ENCODE measurements at regions of chr2 and their contacts with region 1.

Region 1: DNA sequence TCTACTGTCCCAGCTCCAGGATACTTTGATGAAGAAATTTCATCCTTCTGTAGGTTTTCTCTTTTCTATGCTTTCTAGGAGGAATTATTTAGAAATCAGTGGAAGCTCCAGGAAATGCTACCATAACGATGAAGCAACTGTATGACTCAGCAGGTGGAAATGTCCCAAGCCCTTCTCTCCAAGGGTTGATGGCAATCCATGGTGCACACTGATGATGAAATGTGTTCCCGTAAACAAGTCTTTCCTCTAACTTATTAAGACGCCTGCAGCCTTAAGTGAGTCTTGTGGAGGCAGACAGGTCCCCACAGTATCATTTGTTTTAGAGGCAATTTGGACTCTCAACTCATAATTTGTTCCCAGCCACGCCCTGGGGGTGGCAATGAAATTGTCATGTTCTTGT is 777.6 kb upstream of the SOX11 start:
- DNase-seq: peak; percentile 98
- H3K4me3 Mint-ChIP-seq: no peak overlapping the region
- H3K27ac Mint-ChIP-seq: no peak overlapping the region
- H3K4me1 Mint-ChIP-seq: peaks cover 38% of the 10 kb centered on the region
- H3K27me3 Mint-ChIP-seq: no peaks in the 10 kb centered on the region
- CTCF ChIP-seq: no peak

Region 2: DNA sequence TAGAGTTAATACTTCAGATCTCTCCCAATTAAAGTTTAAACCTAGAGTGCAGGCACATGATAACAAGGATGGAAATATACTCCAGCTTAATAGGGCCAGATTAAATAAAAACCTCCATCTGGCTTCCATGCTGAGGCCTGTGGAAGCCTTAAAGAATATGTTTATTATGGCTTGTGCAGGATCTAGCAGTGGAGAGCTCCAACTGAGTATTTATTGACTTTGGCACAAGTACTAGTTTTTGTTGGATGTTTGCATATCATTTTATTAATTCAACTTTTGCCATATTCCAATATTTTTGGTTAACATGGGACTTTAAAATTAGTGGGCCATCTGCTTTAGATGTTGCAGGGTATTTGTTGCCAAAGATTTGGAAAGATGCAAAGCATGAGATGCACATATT is 82.8 kb before region 1 on chr2:
- CTCF ChIA-PET with region 1: no interaction called
- POLR2A ChIA-PET with region 1: no interaction called
- intact Hi-C with region 1: no loop called
- DNase-seq: no peak
- H3K4me3 Mint-ChIP-seq: no peak overlapping the region
- H3K27ac Mint-ChIP-seq: no peak overlapping the region
- H3K4me1 Mint-ChIP-seq: peaks cover 14% of the 10 kb centered on the region
- H3K27me3 Mint-ChIP-seq: no peaks in the 10 kb centered on the region
- CTCF ChIP-seq: no peak

Region 3: GRCh38 chr2:4862031-4862430 is 52.5 kb before region 1 on chr2:
- CTCF ChIA-PET with region 1: no interaction called
- POLR2A ChIA-PET with region 1: interaction called, 11 read pairs
- intact Hi-C with region 1: no loop called
- DNase-seq: peak; percentile 85
- H3K4me3 Mint-ChIP-seq: no peak overlapping the region
- H3K27ac Mint-ChIP-seq: no peak overlapping the region
- H3K4me1 Mint-ChIP-seq: peaks cover 11% of the 10 kb centered on the region
- H3K27me3 Mint-ChIP-seq: no peaks in the 10 kb centered on the region
- CTCF ChIP-seq: no peak

Region 4: GRCh38 chr2:4898706-4899105 is 15.8 kb before region 1 on chr2:
- CTCF ChIA-PET with region 1: no interaction called
- POLR2A ChIA-PET with region 1: interaction called, 6 read pairs
- intact Hi-C with region 1: loop called (anchors 1 kb)
- DNase-seq: peak; percentile 82
- H3K4me3 Mint-ChIP-seq: no peak overlapping the region
- H3K27ac Mint-ChIP-seq: peak overlapping the region; percentile 44
- H3K4me1 Mint-ChIP-seq: peaks cover 24% of the 10 kb centered on the region
- H3K27me3 Mint-ChIP-seq: no peaks in the 10 kb centered on the region
- CTCF ChIP-seq: no peak

Region 5: DNA sequence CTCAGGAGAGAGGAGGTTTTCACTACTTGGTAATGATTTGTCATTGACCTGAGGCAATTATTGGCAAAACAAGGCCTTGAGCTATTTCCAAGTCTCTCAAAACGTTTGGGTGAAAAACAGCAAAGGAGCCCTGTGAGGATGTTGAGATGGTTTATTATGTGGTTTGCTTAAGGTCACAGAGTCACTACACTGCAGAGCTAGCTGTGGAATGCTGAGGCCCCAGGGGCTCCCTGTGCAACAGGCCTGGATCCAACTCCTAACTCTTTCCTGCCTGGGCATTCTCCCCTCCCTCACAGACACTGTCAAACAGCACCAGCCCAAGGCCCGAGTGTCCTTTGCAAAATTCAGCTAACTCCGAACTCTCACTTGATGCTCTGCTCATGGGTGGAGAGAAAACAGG is 23.0 kb after region 1 on chr2:
- CTCF ChIA-PET with region 1: no interaction called
- POLR2A ChIA-PET with region 1: no interaction called
- intact Hi-C with region 1: no loop called
- DNase-seq: no peak
- H3K4me3 Mint-ChIP-seq: no peak overlapping the region
- H3K27ac Mint-ChIP-seq: no peak overlapping the region
- H3K4me1 Mint-ChIP-seq: no peaks in the 10 kb centered on the region
- H3K27me3 Mint-ChIP-seq: no peaks in the 10 kb centered on the region
- CTCF ChIP-seq: no peak